Activated CD8-positive, alpha-beta memory T cell treated with anti-CD3 and anti-CD28 coated beads, Interleukin-2, amount 10 ng/mL, durations not matched to agents 7 days and 5 days (primary cell): ENCODE measurements at regions of chr10 and their contacts with region 1.

Region 1: DNA sequence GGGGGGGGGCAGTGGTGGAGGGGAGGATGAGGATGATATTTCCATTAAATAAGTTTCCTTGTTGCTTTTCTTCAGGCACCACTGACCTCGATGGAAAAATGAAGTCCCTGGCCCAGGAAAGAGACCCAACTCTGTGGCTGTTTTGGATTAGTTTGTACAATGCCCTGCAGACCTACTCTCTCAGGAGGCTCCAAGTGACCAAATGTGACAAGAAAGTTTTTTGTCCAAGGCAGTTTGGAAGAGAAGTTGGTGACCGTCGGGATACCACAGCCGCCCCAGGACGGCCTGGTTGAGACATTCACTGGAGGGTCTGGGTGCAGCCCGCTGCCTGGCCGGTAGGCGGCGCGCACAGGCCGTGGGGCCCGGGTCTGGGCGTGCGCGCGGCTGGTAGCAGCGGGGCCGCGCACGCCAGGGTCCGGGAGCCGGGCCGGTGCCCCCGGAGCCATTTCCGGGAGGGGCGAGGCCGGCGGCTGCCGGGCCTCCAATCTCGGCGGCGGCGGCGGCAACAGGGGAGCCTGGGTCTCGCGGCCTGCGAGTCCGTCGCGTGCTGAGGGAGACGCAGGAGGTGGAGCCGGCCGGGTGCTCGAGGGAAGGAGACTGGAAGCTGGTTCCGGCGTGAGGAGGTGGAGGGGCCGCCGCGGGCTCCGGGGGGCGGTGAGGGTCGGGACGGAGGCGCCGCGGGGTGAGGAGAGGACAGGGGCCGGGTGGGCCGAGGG is at the start of gene SGPL1:
- DNase-seq: peak; percentile 87
- ATAC-seq: peak; percentile 95
- H3K4me3 Mint-ChIP-seq: peak within 1 kb of the TSS; percentile 80
- H3K27ac Mint-ChIP-seq: peak within 1 kb of the TSS; percentile 67
- H3K4me1 Mint-ChIP-seq: peaks cover 21% of the 10 kb centered on the region
- H3K27me3 Mint-ChIP-seq: no peaks in the 10 kb centered on the region
- total RNA-seq, gene SGPL1: 22.5 to 29.3 TPM

Region 2: DNA sequence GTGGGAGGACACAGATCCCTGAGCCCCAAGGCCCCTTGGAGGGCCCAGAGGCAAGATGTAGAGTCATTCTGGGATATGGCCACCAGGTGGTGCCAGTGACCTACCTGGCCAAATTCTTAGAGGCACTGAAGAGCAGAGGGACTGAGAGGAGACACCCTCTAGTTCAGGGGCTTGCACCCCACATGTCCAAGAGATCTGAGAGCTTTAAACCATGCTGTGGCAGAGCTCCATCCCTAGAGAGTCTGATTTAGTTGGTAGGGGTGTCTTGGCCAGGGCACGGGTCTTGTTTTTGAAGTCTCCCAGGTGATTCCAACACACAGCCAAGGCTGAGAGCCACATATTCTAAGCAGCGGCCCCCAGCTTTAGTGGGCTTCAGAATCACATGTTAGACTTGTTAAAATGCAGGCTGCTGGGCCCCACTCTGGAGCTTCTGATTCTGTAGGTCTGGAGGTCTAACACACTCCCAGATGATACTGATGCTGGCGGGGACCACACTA is 265.7 kb before region 1 on chr10:
- CTCF ChIA-PET with region 1: interaction called, 12 read pairs
- DNase-seq: peak; percentile 83
- ATAC-seq: peak; percentile 93
- H3K4me3 Mint-ChIP-seq: no peak overlapping the region
- H3K27ac Mint-ChIP-seq: no peak overlapping the region
- H3K4me1 Mint-ChIP-seq: peaks cover 6% of the 10 kb centered on the region
- H3K27me3 Mint-ChIP-seq: no peaks in the 10 kb centered on the region

Region 3: GRCh38 chr10:70880077-70880534 is 64.4 kb after region 1 on chr10:
- CTCF ChIA-PET with region 1: interaction called, 33 read pairs
- DNase-seq: peak; percentile 86
- ATAC-seq: peak; percentile 93
- H3K4me3 Mint-ChIP-seq: no peak overlapping the region
- H3K27ac Mint-ChIP-seq: no peak overlapping the region
- H3K4me1 Mint-ChIP-seq: peaks cover 9% of the 10 kb centered on the region
- H3K27me3 Mint-ChIP-seq: no peaks in the 10 kb centered on the region